MCF 10A (cell line): ENCODE measurements at regions of chr1 and their contacts with region 1.

Region 1: GRCh38 chr1:214584805-214585766 is 17.9 kb upstream of the CENPF start:
- DNase-seq: peak; percentile 85
- H3K4me3 Mint-ChIP-seq: no peak overlapping the region
- H3K27ac Mint-ChIP-seq: peak overlapping the region; percentile 49
- H3K4me1 Mint-ChIP-seq: peaks cover 38% of the 10 kb centered on the region
- H3K27me3 Mint-ChIP-seq: no peaks in the 10 kb centered on the region
- CTCF ChIP-seq: peak; percentile 98

Region 2: GRCh38 chr1:214281021-214281719 is 303.9 kb before region 1 on chr1 and contains the start of gene SMYD2:
- CTCF ChIA-PET with region 1: interaction called, 3 read pairs
- POLR2A ChIA-PET with region 1: interaction called, 10 read pairs
- intact Hi-C with region 1: no loop called
- DNase-seq: peak; percentile 84
- H3K4me3 Mint-ChIP-seq: peak within 1 kb of the TSS; percentile 89
- H3K27ac Mint-ChIP-seq: peak within 1 kb of the TSS; percentile 84
- H3K4me1 Mint-ChIP-seq: peaks cover 37% of the 10 kb centered on the region
- H3K27me3 Mint-ChIP-seq: no peaks in the 10 kb centered on the region
- CTCF ChIP-seq: no peak
- total RNA-seq, gene SMYD2: 54.5 and 75.1 TPM in 2 replicates

Region 3: DNA sequence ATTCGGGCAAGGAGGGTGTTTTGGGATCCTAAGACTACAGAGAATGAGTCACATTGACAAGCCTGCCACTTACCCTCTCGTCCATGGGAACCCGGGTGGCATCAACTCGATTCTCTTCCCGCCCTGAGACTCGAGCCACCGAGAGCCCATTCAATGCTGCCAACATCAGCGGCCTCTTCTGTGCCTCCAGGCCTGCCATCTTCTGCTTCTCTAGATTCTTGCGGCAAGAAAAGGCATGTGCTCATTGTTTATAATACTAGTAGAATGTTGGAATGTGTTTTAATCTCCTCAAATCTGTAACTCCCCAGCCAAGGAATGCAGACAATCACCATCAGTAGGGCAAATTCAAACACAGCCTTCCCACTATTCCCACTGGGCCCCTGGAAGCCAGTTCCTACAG is 207.2 kb before region 1 on chr1:
- CTCF ChIA-PET with region 1: interaction called, 22 read pairs
- POLR2A ChIA-PET with region 1: interaction called, 6 read pairs
- intact Hi-C with region 1: no loop called
- DNase-seq: no peak
- H3K4me3 Mint-ChIP-seq: no peak overlapping the region
- H3K27ac Mint-ChIP-seq: peak overlapping the region; percentile 47
- H3K4me1 Mint-ChIP-seq: peaks cover 11% of the 10 kb centered on the region
- H3K27me3 Mint-ChIP-seq: no peaks in the 10 kb centered on the region
- CTCF ChIP-seq: no peak

Region 4: GRCh38 chr1:214422137-214422671 is 162.9 kb before region 1 on chr1:
- CTCF ChIA-PET with region 1: interaction called, 64 read pairs
- POLR2A ChIA-PET with region 1: interaction called, 54 read pairs
- intact Hi-C with region 1: no loop called
- DNase-seq: peak; percentile 84
- H3K4me3 Mint-ChIP-seq: peak overlapping the region; percentile 6
- H3K27ac Mint-ChIP-seq: peak overlapping the region; percentile 80
- H3K4me1 Mint-ChIP-seq: peaks cover 77% of the 10 kb centered on the region
- H3K27me3 Mint-ChIP-seq: no peaks in the 10 kb centered on the region
- CTCF ChIP-seq: no peak

Region 5: GRCh38 chr1:214460304-214460916 is 124.7 kb before region 1 on chr1:
- CTCF ChIA-PET with region 1: interaction called, 29 read pairs
- POLR2A ChIA-PET with region 1: interaction called, 27 read pairs
- intact Hi-C with region 1: no loop called
- DNase-seq: no peak
- H3K4me3 Mint-ChIP-seq: no peak overlapping the region
- H3K27ac Mint-ChIP-seq: peak overlapping the region; percentile 30
- H3K4me1 Mint-ChIP-seq: peaks cover 52% of the 10 kb centered on the region
- H3K27me3 Mint-ChIP-seq: no peaks in the 10 kb centered on the region
- CTCF ChIP-seq: no peak

Region 6: DNA sequence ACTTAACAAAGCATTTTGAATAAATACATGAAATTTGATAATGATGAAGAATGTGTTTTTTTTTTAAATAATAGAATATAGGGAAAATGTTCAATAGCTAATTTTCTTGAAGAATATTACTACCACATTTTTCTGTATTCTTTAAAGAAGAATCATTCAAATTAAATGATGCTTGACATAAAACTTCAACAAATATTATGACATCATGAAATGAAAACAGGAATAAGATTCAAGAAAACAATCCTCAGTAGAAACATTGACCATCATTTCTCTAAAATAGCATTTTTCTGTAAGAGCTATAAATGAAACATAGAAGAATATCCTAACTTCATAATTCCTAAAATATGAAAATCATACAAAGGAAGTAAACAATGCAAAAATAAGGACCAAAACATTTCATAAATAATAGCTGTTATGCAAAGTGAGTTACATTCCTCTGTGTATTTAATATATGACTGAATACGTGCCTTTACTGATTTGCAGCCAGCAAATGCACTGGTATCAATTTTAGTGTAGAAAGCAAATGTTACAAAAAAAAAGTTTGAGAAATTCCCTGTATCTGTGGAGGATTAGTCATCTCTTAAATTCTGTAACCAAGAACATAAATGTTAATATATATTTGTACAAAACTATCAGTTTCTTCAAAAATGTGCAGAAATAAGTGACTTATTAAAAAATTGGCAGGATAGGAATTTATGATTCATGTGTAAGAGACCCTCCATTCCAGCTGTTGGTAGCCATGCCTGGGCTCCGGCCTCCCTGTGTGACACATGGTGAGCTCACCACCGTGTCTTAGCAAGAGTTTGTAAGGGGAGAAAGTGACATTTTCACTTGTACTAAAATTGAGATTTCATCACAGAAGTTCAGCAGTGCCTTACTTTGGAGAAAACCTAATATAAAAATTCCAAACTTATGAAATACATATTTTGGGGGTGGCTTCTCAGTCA is 18.7 kb before region 1 on chr1:
- CTCF ChIA-PET with region 1: interaction called, 93 read pairs
- POLR2A ChIA-PET with region 1: interaction called, 2,189 read pairs
- intact Hi-C with region 1: loop called (anchors 1 kb)
- DNase-seq: peak; percentile 85
- H3K4me3 Mint-ChIP-seq: no peak overlapping the region
- H3K27ac Mint-ChIP-seq: peak overlapping the region; percentile 36
- H3K4me1 Mint-ChIP-seq: peaks cover 51% of the 10 kb centered on the region
- H3K27me3 Mint-ChIP-seq: no peaks in the 10 kb centered on the region
- CTCF ChIP-seq: no peak

Region 7: DNA sequence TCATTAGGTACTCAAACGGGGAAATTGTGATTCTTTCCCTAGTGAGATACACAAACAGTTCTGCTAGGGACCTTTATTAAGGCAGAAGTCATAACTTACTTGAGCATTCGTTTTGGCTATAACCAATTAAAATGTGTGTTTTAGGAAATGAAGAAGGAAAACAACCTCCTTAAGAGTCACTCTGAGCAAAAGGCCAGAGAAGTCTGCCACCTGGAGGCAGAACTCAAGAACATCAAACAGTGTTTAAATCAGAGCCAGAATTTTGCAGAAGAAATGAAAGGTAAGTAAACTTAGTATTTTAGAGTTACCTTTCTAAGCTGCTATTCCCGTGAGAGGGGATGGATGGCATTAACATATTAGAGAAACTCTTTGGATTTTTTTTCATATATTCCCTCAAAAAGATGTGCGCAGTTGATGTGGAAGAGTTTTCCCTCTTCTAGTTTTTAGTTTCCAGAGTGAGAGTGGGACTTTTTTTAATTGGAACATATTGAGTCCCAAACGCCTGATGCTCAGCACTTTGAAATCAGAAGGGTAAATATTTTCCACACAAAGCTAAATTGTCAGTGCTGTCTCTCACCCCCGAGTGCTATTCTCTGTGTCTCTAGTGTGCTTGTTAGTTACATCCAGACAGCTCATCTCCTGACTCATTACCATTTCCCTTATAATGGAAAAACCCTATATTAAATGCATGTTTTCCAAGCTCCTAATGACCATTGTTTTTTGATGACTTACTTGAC is 52.8 kb after region 1 on chr1:
- CTCF ChIA-PET with region 1: interaction called, 11 read pairs
- POLR2A ChIA-PET with region 1: interaction called, 3 read pairs
- intact Hi-C with region 1: no loop called
- DNase-seq: peak; percentile 71
- H3K4me3 Mint-ChIP-seq: no peak overlapping the region
- H3K27ac Mint-ChIP-seq: peak overlapping the region; percentile 22
- H3K4me1 Mint-ChIP-seq: no peaks in the 10 kb centered on the region
- H3K27me3 Mint-ChIP-seq: no peaks in the 10 kb centered on the region
- CTCF ChIP-seq: peak; percentile 87